Breast epithelium (tissue), 4 donors: ENCODE measurements at regions of chr6 and their contacts with region 1.

Region 1: GRCh38 chr6:52419809-52420670 is at the start of gene EFHC1:
- DNase-seq: peak; percentile 98
- H3K4me3 ChIP-seq: peak within 1 kb of the TSS; percentile 66 to 77 (median 76)
- H3K27ac ChIP-seq: peak within 1 kb of the TSS; percentile 91 to 92
- H3K4me1 ChIP-seq: no peaks in the 10 kb centered on the region
- H3K27me3 ChIP-seq: no peaks in the 10 kb centered on the region
- CTCF ChIP-seq: no peak
- POLR2A ChIP-seq: peak; percentile 69
- total RNA-seq, gene EFHC1: 26.2 to 55.8 (median 36.7) TPM

Region 2: GRCh38 chr6:52503848-52504781 is 84.1 kb after region 1 on chr6:
- intact Hi-C with region 1: loop called (anchors 10 kb)
- DNase-seq: peak; percentile 92 to 97
- H3K4me3 ChIP-seq: peak overlapping the region in 2 of 3 donors; percentile 27 to 47
- H3K27ac ChIP-seq: peak overlapping the region; percentile 83 to 86
- H3K4me1 ChIP-seq: peaks cover 3 to 13% of the 10 kb centered on the region in 2 donors
- H3K27me3 ChIP-seq: no peaks in the 10 kb centered on the region
- CTCF ChIP-seq: no peak
- POLR2A ChIP-seq: no peak

Region 3: GRCh38 chr6:52598123-52598823 is 178.2 kb after region 1 on chr6:
- intact Hi-C with region 1: loop called (anchors 5 kb)
- DNase-seq: peak in 1 of 2 donors; percentile 27
- H3K4me3 ChIP-seq: peak overlapping the region in 2 of 3 donors; percentile 15 to 50
- H3K27ac ChIP-seq: peak overlapping the region in 1 of 2 donors; percentile 66
- H3K4me1 ChIP-seq: no peaks in the 10 kb centered on the region
- H3K27me3 ChIP-seq: no peaks in the 10 kb centered on the region
- CTCF ChIP-seq: peak; percentile 47 to 67 (median 60)
- POLR2A ChIP-seq: no peak

Region 4: DNA sequence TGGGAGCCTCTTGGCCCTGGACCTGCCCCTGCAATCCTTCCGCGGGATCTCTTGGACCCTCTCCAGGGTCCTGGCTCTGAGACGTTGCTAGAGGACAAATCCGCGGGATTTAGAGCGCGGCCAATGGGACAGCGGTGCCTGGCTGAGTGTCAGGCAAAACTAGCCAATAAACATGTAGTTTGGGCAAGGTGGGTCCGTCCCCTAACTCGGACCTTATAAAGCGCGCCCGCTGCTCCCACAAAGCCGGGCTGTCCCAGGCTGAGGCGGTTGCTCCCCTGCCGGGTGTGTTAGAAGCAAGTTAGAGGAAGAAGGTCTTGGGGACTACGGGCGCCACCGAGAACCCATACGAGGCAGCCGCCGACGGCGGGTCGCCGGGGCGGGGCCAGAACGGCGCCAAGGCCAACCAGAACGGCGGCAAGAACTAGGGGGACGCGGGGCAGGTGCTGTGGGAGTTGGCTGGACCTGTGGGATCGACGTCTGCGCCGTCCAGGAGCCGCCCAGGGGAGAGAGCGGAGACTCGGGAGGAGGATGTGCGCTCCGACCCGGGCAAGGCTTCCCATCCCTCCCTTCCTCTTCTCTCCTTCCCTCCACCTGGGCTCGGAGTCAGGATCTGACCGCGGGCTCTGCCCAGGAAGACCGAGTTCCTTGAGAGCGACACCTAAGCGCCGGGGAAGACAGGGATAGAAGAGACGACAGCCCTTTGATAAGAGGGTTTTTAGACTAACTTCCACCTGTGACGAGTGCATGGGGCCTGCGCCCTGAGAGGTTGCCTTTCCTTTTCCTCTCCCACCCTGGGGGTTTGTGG is 244.3 kb after region 1 on chr6:
- intact Hi-C with region 1: loop called (anchors 2 kb)
- DNase-seq: peak; percentile 84 to 88
- H3K4me3 ChIP-seq: peak overlapping the region; percentile 64 to 77 (median 72)
- H3K27ac ChIP-seq: peak overlapping the region; percentile 76 to 79
- H3K4me1 ChIP-seq: no peaks in the 10 kb centered on the region
- H3K27me3 ChIP-seq: no peaks in the 10 kb centered on the region
- CTCF ChIP-seq: no peak
- POLR2A ChIP-seq: peak; percentile 53